HCT116 (cell line): ENCODE measurements at regions of chr2 and their contacts with region 1.

Region 1: DNA sequence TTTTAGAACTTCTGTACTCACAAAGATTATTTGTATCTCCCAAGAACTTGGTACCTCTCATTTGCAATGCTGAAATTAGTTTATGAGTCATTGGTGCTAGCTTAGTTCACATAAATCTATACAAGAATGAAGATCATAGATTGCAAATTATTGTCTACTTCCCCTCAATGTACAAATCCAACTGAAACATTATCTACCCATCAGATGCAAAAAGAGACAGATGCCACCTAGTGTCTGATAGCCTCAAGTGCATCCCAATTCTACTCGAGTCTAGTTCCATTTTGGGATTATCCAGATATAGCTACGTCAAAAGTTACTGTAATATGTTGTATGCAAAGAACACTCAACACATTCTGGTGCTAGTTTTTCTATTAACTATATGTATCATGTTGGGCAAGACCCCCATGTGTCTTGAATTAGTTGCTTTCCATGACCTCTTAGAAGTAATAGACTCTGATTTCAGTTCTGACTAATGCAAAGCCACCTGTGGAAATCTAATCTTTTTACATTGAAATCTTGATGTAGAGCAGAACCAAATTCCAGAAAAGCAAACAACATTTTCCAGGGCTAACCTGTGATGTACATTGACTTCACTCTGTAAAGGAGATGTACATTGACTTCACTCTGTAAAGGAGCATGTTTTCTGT is 210.0 kb downstream of the RBM43 start:
- DNase-seq: peak; percentile 41
- ATAC-seq: peak; percentile 84
- H3K4me3 ChIP-seq: no peak overlapping the region
- H3K27ac ChIP-seq: no peak overlapping the region
- H3K4me1 ChIP-seq: no peaks in the 10 kb centered on the region
- H3K27me3 ChIP-seq: no peaks in the 10 kb centered on the region
- CTCF ChIP-seq: peak; percentile 44 to 90 (median 81); a peak in 5 of 6 replicates
- POLR2A ChIP-seq: no peak
- RAD21 ChIP-seq: peak; percentile 71

Region 2: DNA sequence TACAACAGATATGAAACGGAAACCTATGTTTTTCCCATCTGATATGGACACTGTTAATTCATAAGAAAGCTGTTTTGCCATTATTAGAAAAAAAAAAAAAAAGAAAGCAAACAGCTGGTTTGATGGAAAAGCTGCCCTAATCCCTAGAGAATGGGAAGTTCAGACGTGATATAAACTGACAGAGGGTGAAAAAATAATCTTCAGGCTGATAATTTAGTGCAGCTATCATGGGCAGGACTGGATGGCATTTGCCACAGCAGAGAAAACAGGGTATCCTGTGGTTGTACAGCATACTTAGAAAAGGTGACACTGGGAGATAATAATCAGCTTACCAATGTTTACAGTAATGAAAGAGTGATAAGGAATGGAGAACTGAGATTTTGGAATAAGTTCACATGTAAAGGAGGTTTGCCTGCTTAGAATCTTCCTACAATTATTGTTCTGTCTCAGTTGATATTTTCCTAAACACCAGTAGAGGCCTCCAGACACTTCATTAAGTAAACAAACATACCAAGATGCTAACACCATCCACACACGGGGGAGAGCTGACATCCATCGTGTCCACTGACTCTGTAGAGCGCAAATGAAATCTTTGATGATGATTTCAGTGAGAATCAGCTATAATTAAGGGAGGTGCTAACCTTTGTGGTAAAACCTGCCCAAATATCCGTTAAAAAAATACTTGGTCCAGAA is 1252.5 kb before region 1 on chr2:
- CTCF ChIA-PET with region 1: no interaction called
- POLR2A ChIA-PET with region 1: no interaction called
- RAD21 ChIA-PET with region 1: no interaction called
- intact Hi-C with region 1: loop called (anchors 5 kb)
- DNase-seq: peak; percentile 2
- ATAC-seq: peak; percentile 80
- H3K4me3 ChIP-seq: no peak overlapping the region
- H3K27ac ChIP-seq: no peak overlapping the region
- H3K4me1 ChIP-seq: no peaks in the 10 kb centered on the region
- H3K27me3 ChIP-seq: no peaks in the 10 kb centered on the region
- CTCF ChIP-seq: peak in 2 of 3 experiments; percentile 49 to 51; a peak in 3 of 6 replicates
- POLR2A ChIP-seq: no peak
- RAD21 ChIP-seq: peak; percentile 77

Region 3: GRCh38 chr2:150610671-150611279 is 440.9 kb before region 1 on chr2:
- CTCF ChIA-PET with region 1: interaction called, 6 read pairs
- POLR2A ChIA-PET with region 1: no interaction called
- RAD21 ChIA-PET with region 1: no interaction called
- intact Hi-C with region 1: loop called (anchors 2 kb)
- DNase-seq: peak; percentile 36
- ATAC-seq: peak; percentile 94
- H3K4me3 ChIP-seq: no peak overlapping the region
- H3K27ac ChIP-seq: no peak overlapping the region
- H3K4me1 ChIP-seq: no peaks in the 10 kb centered on the region
- H3K27me3 ChIP-seq: no peaks in the 10 kb centered on the region
- CTCF ChIP-seq: peak; percentile 54 to 75 (median 60); a peak in 5 of 6 replicates
- POLR2A ChIP-seq: no peak
- RAD21 ChIP-seq: peak; percentile 80

Region 4: GRCh38 chr2:150846691-150847090 is 205.0 kb before region 1 on chr2:
- CTCF ChIA-PET with region 1: no interaction called
- POLR2A ChIA-PET with region 1: no interaction called
- RAD21 ChIA-PET with region 1: no interaction called
- intact Hi-C with region 1: no loop called
- DNase-seq: no peak
- ATAC-seq: no peak
- H3K4me3 ChIP-seq: no peak overlapping the region
- H3K27ac ChIP-seq: no peak overlapping the region
- H3K4me1 ChIP-seq: no peaks in the 10 kb centered on the region
- H3K27me3 ChIP-seq: no peaks in the 10 kb centered on the region
- CTCF ChIP-seq: no peak
- POLR2A ChIP-seq: no peak
- RAD21 ChIP-seq: no peak

Region 5: DNA sequence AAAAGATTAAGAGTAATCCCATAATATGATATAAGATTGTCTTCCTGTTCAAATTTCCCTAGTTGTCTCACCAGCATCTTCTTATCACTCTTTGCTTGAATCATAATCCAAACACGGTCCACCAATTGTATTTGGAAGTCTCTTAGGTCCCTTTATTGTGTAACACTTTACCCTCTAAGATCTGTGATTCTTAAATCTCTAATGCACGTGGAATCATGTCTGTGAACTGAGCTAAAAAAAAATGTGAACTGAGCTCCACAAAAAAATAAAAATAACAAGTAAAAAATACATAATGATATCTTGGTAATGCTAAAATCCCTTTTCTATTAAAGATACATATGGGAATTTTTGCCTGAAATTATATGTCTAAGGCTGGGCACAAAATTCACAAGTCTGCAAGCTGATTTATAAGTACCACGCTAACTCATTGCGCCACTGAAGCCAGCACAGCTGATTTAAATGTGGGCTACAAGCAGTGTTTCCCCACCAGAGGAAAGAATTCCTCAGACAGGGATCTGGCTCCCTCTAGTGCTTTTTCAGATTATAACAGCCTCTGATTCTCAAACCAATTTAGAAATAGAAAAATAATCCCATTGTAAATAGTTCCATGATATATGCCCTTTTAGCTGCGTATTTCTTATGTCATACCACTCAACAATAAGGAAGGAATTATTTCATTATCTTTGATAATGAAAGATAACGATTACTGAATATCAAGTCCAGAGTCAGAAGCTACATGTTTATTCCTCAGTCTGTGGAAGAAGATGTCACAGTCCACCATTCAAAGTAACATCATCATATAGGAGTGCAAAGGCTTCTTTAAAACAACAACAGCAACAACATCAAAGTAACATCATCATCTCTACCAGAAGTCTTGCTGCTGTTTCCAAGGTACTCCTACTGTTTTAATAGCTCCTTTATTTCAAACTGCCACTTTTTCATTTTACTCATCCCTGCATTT is 187.1 kb after region 1 on chr2:
- CTCF ChIA-PET with region 1: interaction called, 13 read pairs
- POLR2A ChIA-PET with region 1: no interaction called
- RAD21 ChIA-PET with region 1: no interaction called
- intact Hi-C with region 1: no loop called
- DNase-seq: peak; percentile 45
- ATAC-seq: peak; percentile 86
- H3K4me3 ChIP-seq: no peak overlapping the region
- H3K27ac ChIP-seq: no peak overlapping the region
- H3K4me1 ChIP-seq: no peaks in the 10 kb centered on the region; a peak in 1 of 4 replicates
- H3K27me3 ChIP-seq: no peaks in the 10 kb centered on the region
- CTCF ChIP-seq: peak; percentile 74 to 87 (median 75)
- POLR2A ChIP-seq: no peak
- RAD21 ChIP-seq: peak; percentile 90